Testis (tissue), 5 donors: ENCODE measurements at regions of chr1 and their contacts with region 1.

Region 1: DNA sequence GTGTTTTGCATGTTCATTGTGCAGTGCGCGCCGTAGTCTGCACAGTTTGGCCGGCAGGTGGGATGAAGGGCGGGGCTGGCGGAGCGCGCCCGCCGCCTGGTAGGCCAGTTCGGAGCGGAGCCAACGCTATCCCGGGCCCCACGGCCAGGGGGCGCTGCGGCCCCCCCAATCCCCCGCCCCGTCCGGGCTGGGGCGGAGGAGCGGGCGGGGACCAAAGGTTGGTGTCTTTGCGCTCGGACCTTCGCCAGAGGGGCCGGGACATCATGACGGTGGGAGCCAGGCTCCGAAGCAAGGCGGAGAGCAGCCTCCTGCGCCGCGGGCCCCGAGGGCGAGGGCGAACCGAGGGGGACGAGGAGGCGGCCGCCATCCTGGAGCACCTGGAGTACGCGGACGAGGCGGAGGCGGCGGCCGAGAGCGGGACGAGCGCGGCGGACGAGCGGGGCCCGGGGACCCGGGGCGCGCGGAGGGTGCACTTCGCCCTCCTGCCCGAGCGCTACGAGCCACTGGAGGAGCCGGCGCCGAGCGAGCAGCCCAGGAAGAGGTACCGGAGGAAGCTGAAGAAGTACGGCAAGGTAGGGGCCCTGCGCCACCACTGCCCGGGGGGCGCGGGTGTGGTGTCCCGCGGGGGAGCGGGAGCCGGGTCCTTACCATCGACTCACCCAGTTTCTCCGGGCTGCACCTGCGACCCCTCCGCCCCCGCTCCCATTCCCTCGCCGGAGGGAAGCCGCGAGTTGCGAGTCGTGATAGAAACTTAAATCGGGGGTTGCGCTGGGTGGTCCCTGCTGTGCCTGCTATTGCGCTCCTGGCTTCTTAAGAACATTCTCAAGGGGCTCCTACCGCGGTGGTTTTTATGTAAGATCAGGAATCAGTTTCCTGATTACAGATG is at the start of gene C1orf115:
- DNase-seq: peak; percentile 82
- H3K4me3 ChIP-seq: peak within 1 kb of the TSS; percentile 77 to 79
- H3K27ac ChIP-seq: peak within 1 kb of the TSS; percentile 12 to 68
- H3K4me1 ChIP-seq: peaks cover 7% of the 10 kb centered on the region
- H3K27me3 ChIP-seq: no peaks in the 10 kb centered on the region
- CTCF ChIP-seq: peak; percentile 84 to 97 (median 90)
- POLR2A ChIP-seq: no peak
- total RNA-seq, gene C1orf115: 10.0 to 10.8 TPM

Region 2: DNA sequence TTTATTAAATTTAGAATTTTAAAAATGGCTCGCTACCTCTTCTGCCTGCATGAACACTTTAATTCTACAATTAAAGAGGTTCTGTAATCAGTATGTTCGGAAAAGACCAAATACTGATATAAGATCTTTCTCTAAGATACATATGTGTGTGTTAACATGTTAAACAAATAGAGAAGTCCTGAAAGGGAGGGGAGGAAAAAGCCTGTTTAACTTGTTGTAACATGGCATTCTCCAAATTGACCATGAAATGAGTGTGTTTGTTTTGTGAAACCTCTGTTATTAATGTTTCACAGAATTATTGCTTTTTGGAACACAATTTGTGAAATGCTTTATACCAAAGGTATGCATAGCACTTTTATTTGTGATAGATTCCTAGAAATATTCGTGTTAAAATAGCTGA is 85.4 kb before region 1 on chr1:
- intact Hi-C with region 1: no loop called
- DNase-seq: no peak
- H3K4me3 ChIP-seq: no peak overlapping the region
- H3K27ac ChIP-seq: no peak overlapping the region
- H3K4me1 ChIP-seq: no peaks in the 10 kb centered on the region
- H3K27me3 ChIP-seq: no peaks in the 10 kb centered on the region
- CTCF ChIP-seq: no peak
- POLR2A ChIP-seq: no peak

Region 3: GRCh38 chr1:220776720-220777326 is 86.4 kb after region 1 on chr1:
- intact Hi-C with region 1: loop called (anchors 10 kb)
- DNase-seq: peak; percentile 92
- H3K4me3 ChIP-seq: peak overlapping the region in 1 of 2 donors; percentile 5
- H3K27ac ChIP-seq: no peak overlapping the region
- H3K4me1 ChIP-seq: no peaks in the 10 kb centered on the region
- H3K27me3 ChIP-seq: no peaks in the 10 kb centered on the region
- CTCF ChIP-seq: peak; percentile 78 to 94 (median 79)
- POLR2A ChIP-seq: no peak